ENCODE measurements at regions of chr14 and their contacts with region 1.

Region 1: DNA sequence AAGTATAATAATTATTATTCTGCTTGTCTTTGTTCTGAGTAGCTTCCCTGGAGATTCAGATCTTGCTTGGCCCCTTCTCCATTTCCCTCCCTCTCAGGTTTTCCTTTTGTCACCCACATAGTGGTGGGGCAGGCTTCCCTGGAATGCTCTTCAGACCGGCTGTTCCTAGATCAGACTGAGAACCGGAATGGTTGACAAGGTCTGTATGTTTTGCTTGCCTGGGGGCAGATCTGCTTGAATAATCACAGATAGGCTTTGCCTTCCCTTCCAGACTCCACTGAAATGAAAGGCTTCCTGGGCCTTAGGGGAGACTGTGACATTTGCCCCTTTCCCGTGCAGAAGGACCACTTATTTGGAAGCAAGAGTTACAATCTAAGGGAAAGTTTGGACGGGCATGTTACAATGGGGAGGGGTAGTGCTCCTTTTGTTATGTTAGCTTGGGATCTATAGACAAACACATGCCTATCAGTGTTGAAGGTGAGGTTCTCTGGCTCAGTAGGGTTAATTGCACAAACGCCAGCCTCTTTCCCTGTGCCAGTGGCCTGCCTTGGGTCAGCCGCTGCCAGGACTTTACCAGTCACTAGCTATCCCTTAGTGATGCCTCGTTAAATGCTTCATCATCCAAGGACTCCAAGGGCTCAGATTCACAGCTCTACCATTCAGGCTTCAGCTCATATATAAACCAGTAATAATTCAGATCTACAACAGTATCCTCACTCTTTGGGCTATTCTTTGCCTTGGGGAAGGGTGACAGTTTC is 178.6 kb downstream of the SNAPC1 start:
- DNase-seq: peak in 1 of 2 experiments; percentile 41
- H3K4me3 ChIP-seq: no peak overlapping the region
- H3K27ac ChIP-seq: no peak overlapping the region
- H3K4me1 ChIP-seq: no peaks in the 10 kb centered on the region
- H3K27me3 ChIP-seq: no peaks in the 10 kb centered on the region
- CTCF ChIP-seq: no peak

Region 2: GRCh38 chr14:61585598-61586543 is 355.0 kb before region 1 on chr14:
- CTCF ChIA-PET with region 1: no interaction called
- POLR2A ChIA-PET with region 1: no interaction called
- intact Hi-C with region 1: no loop called
- DNase-seq: no peak
- H3K4me3 ChIP-seq: no peak overlapping the region
- H3K27ac ChIP-seq: no peak overlapping the region
- H3K4me1 ChIP-seq: peaks cover 9% of the 10 kb centered on the region; the same call in 1 of the 2 replicates
- H3K27me3 ChIP-seq: no peaks in the 10 kb centered on the region
- CTCF ChIP-seq: no peak

Region 3: GRCh38 chr14:62030387-62030786 is 89.5 kb after region 1 on chr14:
- CTCF ChIA-PET with region 1: no interaction called
- POLR2A ChIA-PET with region 1: no interaction called
- intact Hi-C with region 1: loop called (anchors 5 kb)
- DNase-seq: no peak
- H3K4me3 ChIP-seq: no peak overlapping the region
- H3K27ac ChIP-seq: no peak overlapping the region
- H3K4me1 ChIP-seq: peaks cover 10% of the 10 kb centered on the region; the same call in 1 of the 2 replicates
- H3K27me3 ChIP-seq: no peaks in the 10 kb centered on the region
- CTCF ChIP-seq: no peak

Region 4: DNA sequence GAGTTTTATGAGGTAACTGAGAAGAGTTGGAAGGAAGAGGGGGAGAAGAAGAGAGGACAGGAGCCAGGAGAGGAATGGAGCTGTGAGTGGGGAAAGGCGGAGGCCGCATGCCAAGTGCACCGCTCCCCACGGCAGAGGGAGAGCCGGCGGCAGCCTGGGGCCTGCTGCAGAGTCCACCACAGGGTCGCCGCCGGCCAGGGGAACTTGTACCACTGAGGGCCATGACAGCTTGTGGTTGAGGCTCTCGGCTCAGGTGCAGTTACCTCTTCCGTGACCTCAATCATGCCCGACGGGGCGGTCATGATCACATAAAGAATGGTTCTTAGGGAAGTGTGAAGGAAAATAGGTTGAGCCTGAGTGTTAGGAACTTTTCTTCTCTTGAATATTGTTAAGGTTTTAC is 146.3 kb after region 1 on chr14:
- CTCF ChIA-PET with region 1: no interaction called
- POLR2A ChIA-PET with region 1: no interaction called
- intact Hi-C with region 1: no loop called
- DNase-seq: no peak
- H3K4me3 ChIP-seq: no peak overlapping the region
- H3K27ac ChIP-seq: no peak overlapping the region
- H3K4me1 ChIP-seq: no peaks in the 10 kb centered on the region
- H3K27me3 ChIP-seq: no peaks in the 10 kb centered on the region
- CTCF ChIP-seq: no peak